Spleen (tissue), 13 donors: ENCODE measurements at regions of chr2 and their contacts with region 1.

Region 1: GRCh38 chr2:45935791-45936622 is 284.5 kb downstream of the PRKCE start:
- DNase-seq: peak; percentile 88
- H3K4me3 ChIP-seq: no peak overlapping the region
- H3K27ac ChIP-seq: peak overlapping the region in 1 of 8 donors; percentile 42
- H3K4me1 ChIP-seq: peaks cover 0 to 22% (median 8%) of the 10 kb centered on the region in 6 donors
- H3K27me3 ChIP-seq: no peaks in the 10 kb centered on the region
- CTCF ChIP-seq: peak in 10 of 11 experiments; percentile 43 to 82 (median 74)
- POLR2A ChIP-seq: no peak

Region 2: DNA sequence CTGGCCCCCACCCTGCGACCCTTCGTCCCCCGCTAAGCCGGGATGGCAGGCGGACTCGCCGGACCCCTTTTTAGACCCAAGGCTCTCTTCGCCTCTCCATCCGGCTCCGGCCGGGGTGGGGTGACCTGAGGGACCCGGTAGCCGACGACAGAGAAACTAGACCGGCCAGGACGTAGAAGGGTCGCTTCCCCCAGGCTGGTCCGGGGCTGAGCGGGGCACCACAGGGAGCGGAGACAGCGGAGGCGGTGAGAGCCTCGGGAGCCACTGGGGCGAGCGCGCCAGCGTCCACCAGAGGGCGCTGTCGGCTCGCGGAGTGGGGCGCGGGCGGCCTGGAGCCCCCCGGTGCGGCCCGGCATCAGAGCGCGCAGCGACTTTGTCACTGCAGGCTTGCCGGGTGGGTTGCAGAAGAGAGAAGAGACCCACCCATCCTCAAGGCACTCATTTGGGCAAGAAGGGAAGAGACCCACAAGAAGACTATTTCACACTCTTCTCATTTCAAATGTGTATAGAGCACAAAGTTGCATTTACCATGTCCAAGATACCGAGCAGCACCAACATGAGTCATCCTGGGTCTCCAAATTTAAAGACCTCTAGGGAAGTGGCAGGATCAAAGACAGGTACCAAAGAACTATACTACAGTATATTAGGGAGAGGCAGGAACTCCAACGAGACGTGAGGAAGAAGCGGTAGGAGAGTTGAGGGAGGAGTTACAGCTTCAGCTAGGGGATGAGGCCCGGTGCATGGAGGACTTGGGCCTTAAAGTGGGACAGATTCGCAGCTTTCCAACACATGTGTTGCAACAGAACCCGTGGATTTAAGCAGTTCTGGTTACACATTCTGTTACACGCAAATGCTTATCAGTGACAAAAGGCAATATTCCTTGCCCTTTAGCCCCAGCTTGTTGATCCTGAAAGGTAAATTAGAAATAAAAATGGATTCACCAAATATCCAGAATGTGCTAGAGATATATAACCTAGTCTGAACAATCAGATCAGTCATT is 292.2 kb before region 1 on chr2:
- intact Hi-C with region 1: loop called (anchors 2 kb)
- DNase-seq: peak; percentile 95
- H3K4me3 ChIP-seq: peak overlapping the region; percentile 22 to 66 (median 32)
- H3K27ac ChIP-seq: peak overlapping the region in 1 of 8 donors; percentile 34
- H3K4me1 ChIP-seq: peaks cover 0 to 26% (median 19%) of the 10 kb centered on the region in 6 donors
- H3K27me3 ChIP-seq: peaks cover 0 to 20% (median 14%) of the 10 kb centered on the region in 7 donors
- CTCF ChIP-seq: peak; percentile 94 to 99 (median 98)
- POLR2A ChIP-seq: no peak

Region 3: GRCh38 chr2:45778720-45779171 is 157.3 kb before region 1 on chr2:
- intact Hi-C with region 1: loop called (anchors 10 kb)
- DNase-seq: no peak
- H3K4me3 ChIP-seq: peak overlapping the region in 1 of 8 donors; percentile 49
- H3K27ac ChIP-seq: no peak overlapping the region
- H3K4me1 ChIP-seq: peaks cover 4 to 72% (median 20%) of the 10 kb centered on the region in 6 donors
- H3K27me3 ChIP-seq: no peaks in the 10 kb centered on the region
- CTCF ChIP-seq: peak; percentile 58 to 90 (median 80)
- POLR2A ChIP-seq: no peak

Region 4: DNA sequence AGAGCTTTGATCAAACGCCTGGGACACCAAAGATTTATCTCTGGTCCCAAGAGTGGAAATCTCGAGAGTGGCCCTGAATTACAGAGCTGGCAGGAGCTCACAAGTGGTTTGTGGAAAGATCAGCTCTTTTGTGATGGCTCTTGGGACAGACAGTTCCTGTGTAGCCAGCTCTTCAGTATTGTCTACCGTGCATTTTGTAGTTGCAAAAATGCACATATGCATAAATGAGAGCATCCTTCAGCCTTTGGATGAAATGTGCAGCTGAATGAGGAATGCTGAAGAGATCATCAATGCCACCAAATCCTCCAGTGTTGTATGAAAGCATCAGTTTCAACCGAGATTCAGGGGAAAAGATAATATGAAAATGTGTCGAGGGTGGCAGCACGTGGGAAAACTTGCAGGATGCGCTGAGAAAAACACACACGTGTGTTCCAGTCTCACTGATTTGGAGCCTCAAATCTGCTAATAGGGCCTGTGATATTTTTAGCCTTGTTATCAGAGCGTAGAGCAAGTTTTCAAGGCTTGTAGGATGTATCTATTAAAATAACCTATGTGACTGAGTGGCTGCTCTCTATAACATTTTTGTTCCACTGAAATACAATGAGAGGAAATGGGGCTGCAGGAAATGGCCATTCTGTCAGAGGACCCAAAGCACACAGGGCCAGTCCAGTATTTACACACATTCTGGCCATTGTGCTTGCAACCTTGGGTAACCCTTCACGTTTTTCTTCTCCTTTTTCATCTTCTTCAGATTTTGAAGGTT is 145.9 kb before region 1 on chr2:
- intact Hi-C with region 1: loop called (anchors 2 kb)
- DNase-seq: no peak
- H3K4me3 ChIP-seq: no peak overlapping the region
- H3K27ac ChIP-seq: peak overlapping the region in 1 of 8 donors; percentile 18
- H3K4me1 ChIP-seq: peaks cover 4 to 52% (median 24%) of the 10 kb centered on the region in 6 donors
- H3K27me3 ChIP-seq: no peaks in the 10 kb centered on the region
- CTCF ChIP-seq: no peak
- POLR2A ChIP-seq: no peak

Region 5: GRCh38 chr2:45851613-45852304 is 84.2 kb before region 1 on chr2:
- intact Hi-C with region 1: no loop called
- DNase-seq: peak; percentile 54
- H3K4me3 ChIP-seq: no peak overlapping the region
- H3K27ac ChIP-seq: no peak overlapping the region
- H3K4me1 ChIP-seq: peaks cover 0 to 24% (median 6%) of the 10 kb centered on the region in 6 donors
- H3K27me3 ChIP-seq: no peaks in the 10 kb centered on the region
- CTCF ChIP-seq: no peak
- POLR2A ChIP-seq: no peak